Transverse colon (tissue), 4 donors: ENCODE measurements at regions of chr3 and their contacts with region 1.

Region 1: DNA sequence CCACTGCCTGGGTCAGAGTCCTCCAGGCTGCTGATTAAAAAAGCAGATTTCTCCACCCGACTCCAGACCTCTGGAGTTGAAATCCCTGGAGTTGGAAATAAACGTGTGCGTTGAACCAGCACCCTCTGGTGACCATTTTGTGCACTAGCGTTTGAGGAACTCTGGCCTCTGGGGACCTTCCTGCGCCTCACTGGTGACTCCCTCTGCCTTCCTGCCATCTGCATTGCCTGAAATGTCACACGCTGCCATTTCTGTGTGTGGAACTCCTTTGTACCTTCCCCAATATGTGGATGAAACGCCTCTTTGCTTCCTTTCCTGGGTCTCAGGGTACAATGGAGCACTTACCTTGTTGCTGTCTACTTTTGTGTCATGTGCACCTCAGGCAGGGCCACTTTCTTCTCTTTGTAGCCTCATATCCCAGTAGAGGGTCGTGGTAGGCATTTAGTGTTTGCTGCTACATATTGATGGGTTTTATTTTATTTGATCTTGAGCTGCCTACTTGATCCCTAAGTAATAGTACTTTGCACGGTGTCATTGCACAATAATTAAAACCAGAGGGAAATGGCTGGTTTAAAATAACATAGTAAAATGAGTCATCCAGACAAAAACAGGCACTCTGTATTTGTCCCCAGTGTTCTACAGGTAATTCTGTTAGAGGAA is 56.8 kb downstream of the GPR171 start:
- DNase-seq: peak; percentile 75
- H3K4me3 ChIP-seq: no peak overlapping the region
- H3K27ac ChIP-seq: peak overlapping the region in 1 of 4 donors; percentile 35
- H3K4me1 ChIP-seq: peaks cover 0 to 14% (median 7%) of the 10 kb centered on the region in 4 donors
- H3K27me3 ChIP-seq: no peaks in the 10 kb centered on the region
- CTCF ChIP-seq: peak; percentile 76 to 86 (median 84)
- EP300 ChIP-seq: no peak
- POLR2A ChIP-seq: no peak

Region 2: GRCh38 chr3:150710097-150710496 is 436.1 kb before region 1 on chr3:
- in situ Hi-C with region 1: loop called in 1 of 4 experiments (anchors 10 kb)
- intact Hi-C with region 1: no loop called
- DNase-seq: no peak
- H3K4me3 ChIP-seq: no peak overlapping the region
- H3K27ac ChIP-seq: no peak overlapping the region
- H3K4me1 ChIP-seq: no peaks in the 10 kb centered on the region
- H3K27me3 ChIP-seq: no peaks in the 10 kb centered on the region
- CTCF ChIP-seq: no peak
- EP300 ChIP-seq: no peak
- POLR2A ChIP-seq: no peak

Region 3: DNA sequence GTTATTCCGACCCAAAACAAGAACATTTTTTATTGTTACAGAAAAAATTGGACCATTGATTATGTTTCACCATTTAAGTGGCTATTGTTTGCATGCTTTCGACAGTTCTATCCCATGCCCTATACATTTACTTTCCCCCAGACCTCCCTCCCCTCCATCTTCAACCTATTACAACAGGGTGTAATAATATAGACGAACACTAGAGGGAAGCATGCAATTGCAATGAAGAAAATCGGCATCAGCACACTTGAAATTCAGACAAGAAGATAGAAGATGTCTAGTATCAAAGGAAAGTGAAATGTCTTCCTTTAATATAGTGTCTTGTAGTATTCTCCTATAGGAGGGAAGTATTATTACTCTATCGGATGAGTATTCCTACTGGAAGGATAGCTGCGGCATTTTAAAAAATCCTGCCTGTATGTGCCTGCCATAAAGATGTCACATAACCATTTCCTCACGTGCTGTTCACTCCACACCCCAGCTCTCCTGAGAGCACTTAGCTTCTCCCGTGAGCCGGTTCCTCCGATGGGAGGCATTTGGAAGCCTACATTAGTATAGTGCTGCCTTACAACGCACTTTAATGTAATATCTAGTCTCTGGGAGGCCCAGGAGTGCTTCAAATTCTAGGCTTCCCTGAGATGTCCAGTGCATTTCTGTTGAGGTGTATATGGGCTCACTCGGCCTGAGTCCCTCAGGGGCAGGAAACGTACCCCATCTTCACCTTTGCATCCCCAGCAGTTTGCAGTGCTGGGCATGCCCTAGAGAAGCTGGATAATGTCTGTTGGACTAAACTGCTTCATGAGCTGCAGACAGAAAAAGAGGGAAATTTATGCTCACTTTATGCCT is 424.7 kb before region 1 on chr3:
- in situ Hi-C with region 1: loop called in 1 of 4 experiments (anchors 10 kb)
- intact Hi-C with region 1: loop called (anchors 10 kb)
- DNase-seq: no peak
- H3K4me3 ChIP-seq: no peak overlapping the region
- H3K27ac ChIP-seq: no peak overlapping the region
- H3K4me1 ChIP-seq: peaks cover 0 to 16% (median 7%) of the 10 kb centered on the region in 4 donors
- H3K27me3 ChIP-seq: no peaks in the 10 kb centered on the region
- CTCF ChIP-seq: peak; percentile 82 to 93 (median 87)
- EP300 ChIP-seq: no peak
- POLR2A ChIP-seq: no peak

Region 4: DNA sequence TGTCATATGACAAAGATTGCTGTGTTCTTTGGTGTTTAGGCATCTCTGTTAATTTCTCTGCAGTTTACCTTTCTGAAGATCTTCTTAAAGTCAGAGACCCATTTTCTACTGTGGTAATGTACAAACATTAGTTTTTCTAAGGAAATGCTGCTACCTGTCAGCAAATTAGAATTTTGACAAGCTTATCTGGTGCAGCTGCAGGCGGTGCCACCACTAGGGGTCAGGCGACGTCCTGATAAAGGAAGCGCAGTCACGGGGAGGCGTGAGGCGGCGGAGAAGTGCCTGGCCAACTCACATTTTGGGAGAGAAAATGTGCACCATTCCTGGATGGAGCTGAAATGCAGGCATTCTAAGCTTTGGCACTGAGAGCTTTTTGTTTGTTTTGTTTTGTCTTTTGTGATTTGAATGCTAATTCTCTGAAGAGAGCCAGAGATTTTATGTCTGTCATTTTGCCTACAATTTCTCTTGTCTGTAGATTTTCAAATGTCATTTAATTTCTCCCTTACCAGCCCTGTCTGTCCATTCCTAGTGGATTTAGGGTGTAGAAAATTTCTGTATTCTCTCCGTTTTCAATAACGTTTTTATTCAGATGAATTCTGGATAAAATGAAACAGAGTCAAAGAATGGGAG is 358.3 kb before region 1 on chr3:
- in situ Hi-C with region 1: loop called in 3 of 4 experiments (anchors 5 to 25 kb)
- intact Hi-C with region 1: loop called (anchors 5 kb)
- DNase-seq: peak; percentile 87
- H3K4me3 ChIP-seq: no peak overlapping the region
- H3K27ac ChIP-seq: no peak overlapping the region
- H3K4me1 ChIP-seq: no peaks in the 10 kb centered on the region
- H3K27me3 ChIP-seq: peaks cover 7% of the 10 kb centered on the region
- CTCF ChIP-seq: peak; percentile 83 to 93 (median 90)
- EP300 ChIP-seq: no peak
- POLR2A ChIP-seq: no peak

Region 5: GRCh38 chr3:150798122-150798626 is 348.0 kb before region 1 on chr3:
- in situ Hi-C with region 1: loop called in 2 of 4 experiments (anchors 10 to 25 kb)
- intact Hi-C with region 1: no loop called
- DNase-seq: peak; percentile 14
- H3K4me3 ChIP-seq: no peak overlapping the region
- H3K27ac ChIP-seq: no peak overlapping the region
- H3K4me1 ChIP-seq: peaks cover 0 to 10% (median 0%) of the 10 kb centered on the region in 4 donors
- H3K27me3 ChIP-seq: peaks cover 5% of the 10 kb centered on the region
- CTCF ChIP-seq: no peak
- EP300 ChIP-seq: no peak
- POLR2A ChIP-seq: no peak

Region 6: GRCh38 chr3:150913133-150913922 is 232.9 kb before region 1 on chr3:
- in situ Hi-C with region 1: loop called in 1 of 4 experiments (anchors 25 kb)
- intact Hi-C with region 1: no loop called
- DNase-seq: no peak
- H3K4me3 ChIP-seq: no peak overlapping the region
- H3K27ac ChIP-seq: no peak overlapping the region
- H3K4me1 ChIP-seq: no peaks in the 10 kb centered on the region
- H3K27me3 ChIP-seq: no peaks in the 10 kb centered on the region
- CTCF ChIP-seq: no peak
- EP300 ChIP-seq: no peak
- POLR2A ChIP-seq: no peak